CD8-positive, alpha-beta T cell (primary cell): ENCODE measurements at regions of chr6 and their contacts with region 1.

Region 1: DNA sequence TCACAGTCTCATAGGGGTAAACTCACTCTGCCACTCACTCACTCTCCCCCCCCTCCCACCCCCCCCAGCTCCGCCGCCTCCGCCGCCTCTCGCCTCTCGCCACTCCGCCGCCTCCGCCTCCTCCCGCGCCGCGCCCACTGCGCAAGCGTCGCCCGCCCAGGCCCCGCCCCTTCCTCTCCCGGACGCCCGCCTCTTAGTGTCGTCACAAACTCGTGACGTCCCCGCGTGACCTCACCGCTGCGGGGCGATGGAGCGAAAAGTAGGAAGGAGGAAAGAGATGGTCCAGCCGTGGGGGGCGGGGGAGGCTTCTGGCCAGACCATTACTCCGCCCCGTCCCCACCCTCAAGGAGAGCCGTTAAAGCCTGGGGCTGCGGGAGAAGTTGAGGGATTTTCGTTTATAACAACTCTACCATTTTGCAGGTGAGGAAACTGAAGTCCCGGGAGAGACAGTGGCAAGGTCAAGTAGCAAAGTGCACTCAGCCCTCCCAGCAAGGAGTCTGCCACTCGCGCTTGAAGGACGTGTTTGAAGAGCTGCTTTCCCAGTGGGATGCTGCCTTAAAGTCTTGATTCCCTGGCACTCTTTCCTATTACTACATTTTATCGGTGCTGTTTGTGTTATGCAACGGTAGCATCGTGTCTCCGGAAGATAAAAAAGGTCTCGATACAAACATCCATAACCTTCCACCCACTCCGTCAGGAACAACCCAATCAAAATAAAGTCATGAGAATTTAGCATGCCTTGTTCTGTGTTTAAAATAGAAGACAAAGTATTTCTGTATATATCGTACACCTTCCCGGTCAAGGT is at the start of gene ILRUN:
- DNase-seq: peak; percentile 93 to 98 (median 97)
- ATAC-seq: peak; percentile 92
- H3K4me3 ChIP-seq: peak within 1 kb of the TSS; percentile 94 to 96
- H3K4me3 Mint-ChIP-seq: peak within 1 kb of the TSS; percentile 97
- H3K27ac ChIP-seq: peak within 1 kb of the TSS; percentile 93 to 98
- H3K27ac Mint-ChIP-seq: peak within 1 kb of the TSS; percentile 99
- H3K4me1 ChIP-seq: peaks cover 24% of the 10 kb centered on the region
- H3K4me1 Mint-ChIP-seq: peaks cover 43% of the 10 kb centered on the region
- H3K27me3 ChIP-seq: no peaks in the 10 kb centered on the region
- H3K27me3 Mint-ChIP-seq: no peaks in the 10 kb centered on the region
- CTCF ChIP-seq: no peak
- total RNA-seq, gene ILRUN: 54.8 to 58.8 TPM

Region 2: DNA sequence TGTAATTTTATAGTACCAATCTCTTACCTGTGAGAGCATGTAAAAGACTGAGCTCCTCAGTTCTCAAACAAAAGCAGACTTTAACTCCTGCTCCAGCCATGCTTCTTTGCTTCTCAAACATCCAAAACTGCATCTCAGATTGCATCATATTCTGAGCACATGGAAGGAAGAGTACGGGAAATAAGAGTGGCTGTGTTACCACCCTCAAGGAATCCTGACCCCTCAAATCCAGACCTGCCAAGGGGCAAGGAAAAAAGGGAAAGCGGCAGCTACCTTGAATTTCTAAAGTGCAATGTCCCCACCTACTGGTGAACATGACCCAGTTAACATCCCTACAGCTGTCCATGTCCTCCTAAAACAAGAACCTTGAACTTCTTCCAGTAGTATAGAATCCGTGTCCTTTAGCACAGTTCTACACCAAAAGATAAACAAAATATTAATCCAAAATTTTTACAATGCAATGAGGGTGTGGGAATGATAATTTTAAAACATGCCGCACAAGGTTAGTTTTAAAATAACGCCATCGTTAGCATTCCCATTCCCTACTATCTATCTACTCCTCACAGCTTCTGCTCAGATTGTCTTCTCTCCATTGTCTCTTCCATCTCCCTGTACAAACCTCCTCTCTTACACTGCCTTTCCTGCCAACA is 1996.4 kb before region 1 on chr6:
- CTCF ChIA-PET with region 1: no interaction called
- POLR2A ChIA-PET with region 1: no interaction called
- intact Hi-C with region 1: no loop called
- DNase-seq: peak in 6 of 9 experiments; percentile 2 to 71 (median 46)
- ATAC-seq: peak; percentile 49
- H3K4me3 ChIP-seq: no peak overlapping the region
- H3K4me3 Mint-ChIP-seq: no peak overlapping the region
- H3K27ac ChIP-seq: no peak overlapping the region
- H3K27ac Mint-ChIP-seq: no peak overlapping the region
- H3K4me1 ChIP-seq: no peaks in the 10 kb centered on the region
- H3K4me1 Mint-ChIP-seq: peaks cover 4% of the 10 kb centered on the region
- H3K27me3 ChIP-seq: no peaks in the 10 kb centered on the region
- H3K27me3 Mint-ChIP-seq: peaks cover 40% of the 10 kb centered on the region
- CTCF ChIP-seq: peak; percentile 86

Region 3: DNA sequence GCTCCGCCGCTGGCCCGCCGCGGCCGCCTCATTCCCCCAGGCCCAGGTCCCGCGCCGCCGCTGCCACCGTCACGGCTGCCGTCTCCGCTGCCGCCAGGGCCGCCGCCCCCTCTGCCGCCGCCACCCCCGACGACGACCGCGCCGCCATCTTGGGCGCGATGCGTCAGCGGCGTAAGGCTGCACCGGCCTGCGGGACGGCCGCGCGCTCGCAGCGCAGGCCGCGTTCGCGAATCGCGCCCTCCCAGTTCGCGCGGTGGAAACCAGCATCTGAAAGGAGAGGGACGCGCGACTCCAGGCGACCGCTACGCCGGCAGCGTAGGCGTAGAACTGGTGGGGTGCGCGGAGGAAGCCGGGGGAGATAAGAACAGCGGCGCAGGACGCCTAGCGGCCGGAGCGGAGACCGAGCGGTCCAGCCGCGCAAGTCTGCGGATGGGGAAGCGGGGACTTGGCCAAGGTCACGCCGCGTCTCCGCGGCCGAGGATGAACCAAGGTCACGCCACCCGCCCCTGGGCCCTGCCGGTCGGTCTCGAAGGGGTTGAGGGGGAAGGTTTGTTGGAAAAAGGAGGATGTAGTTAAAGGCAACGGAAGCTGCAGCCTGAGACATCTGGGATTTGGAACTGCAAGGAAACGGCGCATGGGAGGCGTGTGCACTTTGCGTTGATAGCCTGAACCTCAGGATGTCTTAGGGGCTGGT is 304.3 kb before region 1 on chr6 and contains the start of gene NUDT3:
- CTCF ChIA-PET with region 1: no interaction called
- POLR2A ChIA-PET with region 1: no interaction called
- intact Hi-C with region 1: loop called in 1 of 2 experiments (anchors 2 kb)
- DNase-seq: peak; percentile 90 to 98 (median 93)
- ATAC-seq: peak; percentile 90
- H3K4me3 ChIP-seq: peak within 1 kb of the TSS; percentile 78 to 96
- H3K4me3 Mint-ChIP-seq: peak within 1 kb of the TSS; percentile 72
- H3K27ac ChIP-seq: peak within 1 kb of the TSS; percentile 71 to 75
- H3K27ac Mint-ChIP-seq: peak within 1 kb of the TSS; percentile 94
- H3K4me1 ChIP-seq: peaks cover 15% of the 10 kb centered on the region
- H3K4me1 Mint-ChIP-seq: peaks cover 26% of the 10 kb centered on the region
- H3K27me3 ChIP-seq: no peaks in the 10 kb centered on the region
- H3K27me3 Mint-ChIP-seq: no peaks in the 10 kb centered on the region
- CTCF ChIP-seq: peak; percentile 77
- total RNA-seq, gene NUDT3: 12.5 to 12.9 TPM

Region 4: DNA sequence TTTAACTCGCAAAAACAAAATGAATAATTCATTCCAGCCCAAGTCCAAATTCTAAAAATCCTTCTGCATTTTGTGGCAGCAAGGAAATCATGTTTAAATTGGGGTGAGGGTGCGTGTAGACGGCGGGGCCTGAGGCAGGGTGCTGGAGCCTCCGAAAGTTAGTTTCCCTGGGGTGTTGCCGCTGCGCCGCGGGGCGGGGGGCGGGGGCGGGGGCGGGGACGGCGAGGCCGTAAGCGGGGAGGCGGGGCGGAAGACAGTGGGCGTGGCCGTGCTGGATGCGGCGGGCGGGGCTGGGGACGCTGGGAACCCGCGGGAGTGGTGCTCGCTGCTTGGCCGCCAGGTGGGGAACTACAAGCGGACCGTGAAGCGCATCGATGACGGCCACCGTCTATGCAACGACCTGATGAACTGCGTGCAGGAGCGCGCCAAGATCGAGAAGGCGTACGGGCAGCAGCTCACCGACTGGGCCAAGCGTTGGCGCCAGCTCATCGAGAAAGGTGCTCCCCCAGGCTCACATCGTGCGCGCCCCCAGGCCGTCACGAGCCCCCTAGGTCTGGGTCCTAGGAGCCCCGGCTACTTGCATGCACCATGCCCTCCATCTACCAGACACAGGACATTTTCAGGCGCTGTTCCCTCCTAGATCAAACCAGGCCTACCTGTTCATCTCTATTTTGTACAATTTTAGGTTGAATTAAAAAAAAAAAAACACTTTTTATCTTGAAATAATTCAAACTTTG is 169.8 kb before region 1 on chr6:
- CTCF ChIA-PET with region 1: no interaction called
- POLR2A ChIA-PET with region 1: no interaction called
- intact Hi-C with region 1: loop called (anchors 1 to 2 kb)
- DNase-seq: peak; percentile 91 to 99 (median 96)
- ATAC-seq: peak; percentile 98
- H3K4me3 ChIP-seq: peak overlapping the region; percentile 17 to 31
- H3K4me3 Mint-ChIP-seq: peak overlapping the region; percentile 58
- H3K27ac ChIP-seq: peak overlapping the region; percentile 31 to 58
- H3K27ac Mint-ChIP-seq: peak overlapping the region; percentile 80
- H3K4me1 ChIP-seq: peaks cover 7% of the 10 kb centered on the region
- H3K4me1 Mint-ChIP-seq: peaks cover 14% of the 10 kb centered on the region
- H3K27me3 ChIP-seq: no peaks in the 10 kb centered on the region
- H3K27me3 Mint-ChIP-seq: no peaks in the 10 kb centered on the region
- CTCF ChIP-seq: peak; percentile 51

Region 5: GRCh38 chr6:34671801-34672656 is 24.9 kb before region 1 on chr6:
- CTCF ChIA-PET with region 1: interaction called, 8 read pairs
- POLR2A ChIA-PET with region 1: interaction called, 20 read pairs
- intact Hi-C with region 1: loop called (anchors 1 kb)
- DNase-seq: peak; percentile 52 to 94 (median 75)
- ATAC-seq: peak; percentile 98
- H3K4me3 ChIP-seq: peak overlapping the region in 1 of 2 experiments; percentile 21
- H3K4me3 Mint-ChIP-seq: peak overlapping the region; percentile 72
- H3K27ac ChIP-seq: peak overlapping the region; percentile 25 to 82
- H3K27ac Mint-ChIP-seq: peak overlapping the region; percentile 95
- H3K4me1 ChIP-seq: peaks cover 50% of the 10 kb centered on the region
- H3K4me1 Mint-ChIP-seq: peaks cover 71% of the 10 kb centered on the region
- H3K27me3 ChIP-seq: no peaks in the 10 kb centered on the region
- H3K27me3 Mint-ChIP-seq: no peaks in the 10 kb centered on the region
- CTCF ChIP-seq: no peak

Region 6: DNA sequence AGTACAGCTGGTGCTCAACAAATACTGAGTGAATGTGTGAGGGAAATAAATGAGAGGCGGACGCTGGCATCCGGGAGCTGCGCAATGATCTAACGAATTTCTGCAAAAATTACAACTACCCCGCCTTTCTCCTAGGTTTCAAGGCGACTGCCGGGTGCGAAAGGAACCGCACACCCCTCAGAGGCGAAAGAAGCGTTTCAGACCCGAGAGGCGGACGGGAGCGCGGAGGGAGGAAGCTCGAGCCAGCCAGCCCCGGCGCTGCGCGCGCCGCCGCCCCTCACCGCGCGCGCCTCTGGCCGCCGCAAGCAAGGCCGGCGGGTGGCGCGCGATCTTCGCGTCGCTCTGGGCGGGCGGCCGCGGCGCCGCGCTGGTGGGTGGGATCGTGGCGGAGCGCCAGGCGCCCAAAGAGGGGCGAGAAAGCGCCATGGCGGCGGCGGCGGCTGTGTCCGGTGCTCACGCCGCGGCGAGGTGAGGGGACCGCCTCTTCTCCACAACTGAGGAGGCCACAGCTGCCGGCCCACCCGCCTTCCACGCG is 94.8 kb after region 1 on chr6 and contains the start of gene BLTP3A:
- CTCF ChIA-PET with region 1: no interaction called
- POLR2A ChIA-PET with region 1: interaction called, 5 read pairs
- intact Hi-C with region 1: loop called in 1 of 2 experiments (anchors 2 kb)
- DNase-seq: peak; percentile 48 to 91 (median 71)
- ATAC-seq: peak; percentile 90
- H3K4me3 ChIP-seq: peak within 1 kb of the TSS; percentile 75 to 95
- H3K4me3 Mint-ChIP-seq: peak within 1 kb of the TSS; percentile 99
- H3K27ac ChIP-seq: peak within 1 kb of the TSS; percentile 75 to 79
- H3K27ac Mint-ChIP-seq: peak within 1 kb of the TSS; percentile 94
- H3K4me1 ChIP-seq: peaks cover 12% of the 10 kb centered on the region
- H3K4me1 Mint-ChIP-seq: peaks cover 29% of the 10 kb centered on the region
- H3K27me3 ChIP-seq: no peaks in the 10 kb centered on the region
- H3K27me3 Mint-ChIP-seq: no peaks in the 10 kb centered on the region
- CTCF ChIP-seq: no peak
- total RNA-seq, gene BLTP3A: 8.8 to 9.3 TPM